Activated T-helper 2 cell treated with anti-CD3 and anti-CD28 coated beads, Interferon-gamma antibody, Interleukin-2, Interleukin-4, amounts not matched to agents 10 μg/mL and 5 μg/mL and 100 μg/mL, durations not matched to agents 14 hours and 24 hours and 36 hours (primary cell): ENCODE measurements at regions of chr10 and their contacts with region 1.

Region 1: GRCh38 chr10:68988530-68989316 is at the start of gene KIFBP:
- DNase-seq: peak; percentile 83
- H3K4me3 Mint-ChIP-seq: peak within 1 kb of the TSS; percentile 96
- H3K27ac Mint-ChIP-seq: peak within 1 kb of the TSS; percentile 90
- H3K4me1 Mint-ChIP-seq: peaks cover 36% of the 10 kb centered on the region
- H3K27me3 Mint-ChIP-seq: no peaks in the 10 kb centered on the region
- total RNA-seq, gene KIFBP: 16.7 and 17.1 TPM in 2 replicates

Region 2: DNA sequence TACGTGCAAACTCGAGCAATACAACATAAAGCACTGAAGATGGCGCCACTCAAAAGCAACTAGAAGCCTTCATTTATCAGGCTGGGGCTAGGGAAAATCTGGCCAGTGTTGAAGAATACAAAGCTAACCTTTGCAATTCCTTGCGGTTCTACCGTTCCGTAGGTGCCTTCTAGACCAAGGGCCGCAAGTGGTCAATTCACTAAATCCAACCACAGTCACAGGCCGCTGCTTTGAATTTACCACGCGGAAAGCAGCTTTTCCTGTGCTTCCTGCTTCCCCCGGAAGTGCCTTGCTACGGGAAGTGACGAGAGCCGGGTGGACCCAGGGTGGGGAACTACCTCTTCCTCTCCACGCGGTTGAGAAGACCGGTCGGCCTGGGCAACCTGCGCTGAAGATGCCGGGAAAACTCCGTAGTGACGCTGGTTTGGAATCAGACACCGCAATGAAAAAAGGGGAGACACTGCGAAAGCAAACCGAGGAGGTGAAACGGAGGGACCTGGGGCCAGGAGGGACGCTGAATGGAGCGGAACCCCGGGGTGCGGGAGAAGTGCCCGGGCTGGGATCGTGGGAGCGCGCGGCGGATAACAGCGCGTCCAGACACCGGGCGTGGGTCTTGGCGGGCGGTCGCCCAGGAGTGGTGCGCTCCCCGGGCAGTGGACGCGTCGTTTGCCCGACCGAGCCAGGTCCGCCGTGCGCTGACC is 32.7 kb before region 1 on chr10 and contains the start of gene DDX21:
- intact Hi-C with region 1: loop called (anchors 1 kb)
- DNase-seq: peak; percentile 86
- H3K4me3 Mint-ChIP-seq: peak within 1 kb of the TSS; percentile 97
- H3K27ac Mint-ChIP-seq: peak within 1 kb of the TSS; percentile 100
- H3K4me1 Mint-ChIP-seq: peaks cover 22% of the 10 kb centered on the region
- H3K27me3 Mint-ChIP-seq: no peaks in the 10 kb centered on the region
- total RNA-seq, gene DDX21: 205 and 210 TPM in 2 replicates

Region 3: GRCh38 chr10:68973975-68974374 is 14.7 kb before region 1 on chr10:
- intact Hi-C with region 1: no loop called
- DNase-seq: no peak
- H3K4me3 Mint-ChIP-seq: no peak overlapping the region
- H3K27ac Mint-ChIP-seq: no peak overlapping the region
- H3K4me1 Mint-ChIP-seq: peaks cover 12% of the 10 kb centered on the region
- H3K27me3 Mint-ChIP-seq: no peaks in the 10 kb centered on the region

Region 4: GRCh38 chr10:69045441-69046300 is 56.9 kb after region 1 on chr10:
- intact Hi-C with region 1: no loop called
- DNase-seq: peak; percentile 49
- H3K4me3 Mint-ChIP-seq: peak overlapping the region; percentile 70
- H3K27ac Mint-ChIP-seq: peak overlapping the region; percentile 100
- H3K4me1 Mint-ChIP-seq: peaks cover 49% of the 10 kb centered on the region
- H3K27me3 Mint-ChIP-seq: no peaks in the 10 kb centered on the region

Region 5: DNA sequence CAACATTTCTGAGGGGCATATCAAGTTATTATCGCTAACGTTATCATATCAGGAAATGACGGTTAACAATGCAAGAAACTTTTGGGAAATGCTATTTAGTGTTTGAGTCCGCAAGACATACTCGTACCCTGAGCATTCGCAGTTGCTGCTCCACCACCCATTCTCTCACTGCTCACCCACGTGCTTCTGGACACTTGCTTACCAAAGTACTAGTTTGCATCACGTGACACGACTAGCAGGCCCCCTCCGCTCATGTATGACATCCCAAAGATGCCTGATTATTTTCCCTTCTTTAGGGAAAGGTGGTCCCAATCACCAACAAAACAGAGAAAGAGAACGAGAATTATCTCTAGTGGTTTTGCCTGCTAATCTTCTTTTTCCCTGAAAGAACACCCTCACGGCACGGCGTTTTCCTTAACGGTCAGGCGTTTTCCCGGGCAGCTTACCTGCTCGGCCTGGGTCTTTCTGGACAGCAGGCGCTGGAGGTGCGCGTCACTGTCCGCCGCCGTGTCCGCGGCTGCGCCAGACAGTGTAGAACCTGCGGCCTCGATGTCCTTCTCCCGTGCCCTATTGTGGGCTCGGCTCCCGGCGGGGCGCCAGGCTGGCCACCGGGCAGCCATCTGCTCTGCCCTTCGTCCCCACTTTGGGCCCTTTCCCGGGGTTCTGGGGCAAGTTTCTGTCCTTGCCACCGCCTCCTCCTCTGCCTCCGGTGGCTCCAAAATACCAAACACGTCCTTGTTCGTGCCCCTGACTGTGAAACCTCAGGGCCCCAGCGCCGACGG is 191.2 kb after region 1 on chr10 and contains the start of gene SUPV3L1:
- intact Hi-C with region 1: loop called (anchors 2 kb)
- DNase-seq: peak; percentile 83
- H3K4me3 Mint-ChIP-seq: peak within 1 kb of the TSS; percentile 99
- H3K27ac Mint-ChIP-seq: peak within 1 kb of the TSS; percentile 100
- H3K4me1 Mint-ChIP-seq: peaks cover 26% of the 10 kb centered on the region
- H3K27me3 Mint-ChIP-seq: no peaks in the 10 kb centered on the region
- total RNA-seq, gene SUPV3L1: 52.8 and 53.1 TPM in 2 replicates